ENCODE measurements at regions of chr1 and their contacts with region 1.

Region 1: GRCh38 chr1:237386362-237387143 is 344.6 kb downstream of the RYR2 start:
- DNase-seq: no peak
- ATAC-seq: no peak
- H3K4me3 Mint-ChIP-seq: no peak overlapping the region
- H3K27ac Mint-ChIP-seq: no peak overlapping the region
- H3K4me1 Mint-ChIP-seq: peaks cover 3% of the 10 kb centered on the region
- H3K27me3 Mint-ChIP-seq: peaks cover 11% of the 10 kb centered on the region

Region 2: DNA sequence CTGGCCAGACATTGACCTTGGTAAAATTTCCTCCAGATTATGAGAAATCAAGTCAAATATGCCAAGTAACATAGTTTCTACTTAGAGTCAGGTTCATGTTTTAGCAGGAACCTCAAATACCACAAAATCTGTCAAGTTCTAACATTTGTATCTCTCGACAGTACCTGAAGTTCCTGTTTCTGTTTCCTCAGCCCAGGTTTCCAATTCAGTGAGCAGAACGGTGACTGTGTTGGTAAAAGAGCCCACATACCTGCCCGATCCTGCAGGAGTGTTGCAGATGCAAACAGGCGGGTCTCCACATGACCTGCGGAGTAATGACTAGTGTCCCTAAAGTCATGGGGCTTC is 920.6 kb before region 1 on chr1:
- CTCF ChIA-PET with region 1: no interaction called
- DNase-seq: no peak
- ATAC-seq: peak; percentile 39
- H3K4me3 Mint-ChIP-seq: peak overlapping the region; percentile 1
- H3K27ac Mint-ChIP-seq: no peak overlapping the region
- H3K4me1 Mint-ChIP-seq: peaks cover 19% of the 10 kb centered on the region
- H3K27me3 Mint-ChIP-seq: peaks cover 38% of the 10 kb centered on the region

Region 3: GRCh38 chr1:236759252-236759859 is 627.2 kb before region 1 on chr1:
- CTCF ChIA-PET with region 1: interaction called, 13 read pairs
- DNase-seq: no peak
- ATAC-seq: peak; percentile 36
- H3K4me3 Mint-ChIP-seq: no peak overlapping the region
- H3K27ac Mint-ChIP-seq: no peak overlapping the region
- H3K4me1 Mint-ChIP-seq: peaks cover 3% of the 10 kb centered on the region
- H3K27me3 Mint-ChIP-seq: peaks cover 6% of the 10 kb centered on the region

Region 4: GRCh38 chr1:237258871-237259270 is 127.7 kb before region 1 on chr1:
- CTCF ChIA-PET with region 1: no interaction called
- DNase-seq: no peak
- ATAC-seq: no peak
- H3K4me3 Mint-ChIP-seq: no peak overlapping the region
- H3K27ac Mint-ChIP-seq: no peak overlapping the region
- H3K4me1 Mint-ChIP-seq: no peaks in the 10 kb centered on the region
- H3K27me3 Mint-ChIP-seq: peaks cover 6% of the 10 kb centered on the region

Measured in activated CD8-positive, alpha-beta memory T cell treated with anti-CD3 and anti-CD28 coated beads, Interleukin-2, amount 10 ng/mL, durations not matched to agents 7 days and 5 days (primary cell).